ENCODE measurements at regions of chr3 and their contacts with region 1.

Region 1: GRCh38 chr3:39189959-39190269 is 2.5 kb downstream of the XIRP1 start:
- DNase-seq: peak in 1 of 2 experiments; percentile 73
- H3K4me3 ChIP-seq: no peak overlapping the region
- H3K27ac ChIP-seq: no peak overlapping the region
- H3K4me1 ChIP-seq: no peaks in the 10 kb centered on the region
- H3K27me3 ChIP-seq: no peaks in the 10 kb centered on the region
- CTCF ChIP-seq: peak in 2 of 3 experiments; percentile 91 to 93; a peak in 3 of 4 replicates
- EP300 ChIP-seq: no peak
- POLR2A ChIP-seq: no peak
- RAD21 ChIP-seq: peak; percentile 93 to 96

Region 2: GRCh38 chr3:39154280-39155021 is 35.5 kb before region 1 on chr3:
- CTCF ChIA-PET with region 1: interaction called, 11 read pairs
- POLR2A ChIA-PET with region 1: interaction called, 4 read pairs
- DNase-seq: peak; percentile 84 to 85
- H3K4me3 ChIP-seq: peak overlapping the region; percentile 50 to 85 (median 60)
- H3K27ac ChIP-seq: peak overlapping the region; percentile 78
- H3K4me1 ChIP-seq: peaks cover 22 to 40% (median 26%) of the 10 kb centered on the region in 4 experiments
- H3K27me3 ChIP-seq: no peaks in the 10 kb centered on the region
- CTCF ChIP-seq: no peak
- EP300 ChIP-seq: no peak
- POLR2A ChIP-seq: peak in 1 of 2 experiments; percentile 79; a peak in 1 of 3 replicates
- RAD21 ChIP-seq: 0 out of 4 replicates have a peak, but pooled peaks have one; percentile 2 to 13

Region 3: DNA sequence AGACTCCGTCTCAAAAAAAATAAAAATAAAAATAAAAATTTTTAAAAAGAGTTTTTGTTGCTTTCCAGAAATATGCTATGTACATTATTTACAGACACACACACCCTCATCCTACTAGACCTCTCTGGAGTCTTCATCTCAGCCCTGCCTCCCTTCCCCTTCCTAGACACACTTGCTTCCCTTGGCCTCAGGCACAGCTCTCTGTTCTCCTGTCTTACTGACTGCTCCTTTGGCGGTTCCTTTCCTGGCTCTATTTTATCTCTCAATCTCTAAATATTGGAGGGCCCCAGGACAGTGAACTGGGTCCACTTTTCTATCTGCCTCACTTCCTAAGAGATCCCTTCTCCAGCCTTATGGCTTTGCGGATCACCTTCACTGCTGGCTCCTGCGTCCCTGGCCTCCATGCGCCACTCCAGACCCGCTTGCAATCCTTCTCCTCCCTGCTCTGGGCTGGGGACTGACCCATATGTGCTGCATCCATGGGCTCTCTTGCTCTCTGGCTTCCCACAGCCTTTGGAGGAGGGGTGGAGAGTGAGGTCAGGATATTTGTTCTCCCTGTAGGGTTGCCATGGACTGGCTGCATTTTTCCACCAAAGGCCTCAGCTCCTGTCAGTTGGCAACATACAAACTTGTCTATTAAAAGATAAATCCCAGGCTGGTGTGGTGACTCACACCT is 15.0 kb before region 1 on chr3:
- CTCF ChIA-PET with region 1: interaction called, 11 read pairs
- POLR2A ChIA-PET with region 1: no interaction called
- DNase-seq: no peak
- H3K4me3 ChIP-seq: no peak overlapping the region
- H3K27ac ChIP-seq: no peak overlapping the region
- H3K4me1 ChIP-seq: peaks cover 2 to 14% (median 9%) of the 10 kb centered on the region in 4 experiments; a peak in 6 of 7 replicates
- H3K27me3 ChIP-seq: peaks cover 0 to 10% (median 8%) of the 10 kb centered on the region in 4 experiments; a peak in 5 of 7 replicates
- CTCF ChIP-seq: no peak
- EP300 ChIP-seq: no peak
- POLR2A ChIP-seq: no peak
- RAD21 ChIP-seq: no peak

Region 4: GRCh38 chr3:39249453-39250115 is 59.7 kb after region 1 on chr3:
- CTCF ChIA-PET with region 1: interaction called, 10 read pairs
- POLR2A ChIA-PET with region 1: no interaction called
- DNase-seq: no peak
- H3K4me3 ChIP-seq: no peak overlapping the region
- H3K27ac ChIP-seq: no peak overlapping the region
- H3K4me1 ChIP-seq: peaks cover 0 to 3% (median 0%) of the 10 kb centered on the region in 4 experiments; a peak in 1 of 7 replicates
- H3K27me3 ChIP-seq: no peaks in the 10 kb centered on the region; a peak in 2 of 7 replicates
- CTCF ChIP-seq: no peak
- EP300 ChIP-seq: no peak
- POLR2A ChIP-seq: no peak
- RAD21 ChIP-seq: no peak

Region 5: DNA sequence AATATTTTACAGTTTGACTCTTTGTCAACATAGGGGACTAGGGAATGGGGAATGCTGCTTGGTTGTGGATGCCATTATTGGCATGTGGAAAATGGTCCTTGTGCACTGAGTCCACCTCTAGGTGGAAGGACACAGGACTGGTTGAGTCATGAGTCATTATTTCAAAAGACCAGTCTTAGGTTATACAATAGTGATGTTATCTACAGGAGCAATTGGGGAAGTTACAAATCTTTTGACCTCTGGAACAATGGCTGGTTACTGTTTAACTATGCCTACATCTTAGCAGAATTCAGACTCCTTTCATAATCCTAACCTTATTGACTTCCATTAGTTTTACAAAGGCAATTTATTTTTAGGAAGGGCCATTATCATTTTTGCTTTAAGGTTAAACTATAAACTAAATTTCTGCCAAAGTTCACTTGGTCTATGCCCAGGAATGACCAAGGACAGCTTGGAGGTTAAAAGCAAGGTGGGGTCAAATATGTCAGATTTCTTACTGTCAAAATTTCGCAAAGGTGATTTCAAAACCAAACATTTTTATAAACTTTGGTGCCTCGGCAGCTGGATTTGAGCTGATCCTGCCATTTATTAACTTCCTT is 127.8 kb after region 1 on chr3:
- CTCF ChIA-PET with region 1: no interaction called
- POLR2A ChIA-PET with region 1: no interaction called
- DNase-seq: no peak
- H3K4me3 ChIP-seq: no peak overlapping the region
- H3K27ac ChIP-seq: no peak overlapping the region
- H3K4me1 ChIP-seq: no peaks in the 10 kb centered on the region
- H3K27me3 ChIP-seq: no peaks in the 10 kb centered on the region
- CTCF ChIP-seq: no peak
- EP300 ChIP-seq: no peak
- POLR2A ChIP-seq: no peak
- RAD21 ChIP-seq: no peak

Measured in H1 (cell line).